Activated B cell treated with CpG ODN at 0.5 μM for 24 hours (primary cell): ENCODE measurements at regions of chr15 and their contacts with region 1.

Region 1: DNA sequence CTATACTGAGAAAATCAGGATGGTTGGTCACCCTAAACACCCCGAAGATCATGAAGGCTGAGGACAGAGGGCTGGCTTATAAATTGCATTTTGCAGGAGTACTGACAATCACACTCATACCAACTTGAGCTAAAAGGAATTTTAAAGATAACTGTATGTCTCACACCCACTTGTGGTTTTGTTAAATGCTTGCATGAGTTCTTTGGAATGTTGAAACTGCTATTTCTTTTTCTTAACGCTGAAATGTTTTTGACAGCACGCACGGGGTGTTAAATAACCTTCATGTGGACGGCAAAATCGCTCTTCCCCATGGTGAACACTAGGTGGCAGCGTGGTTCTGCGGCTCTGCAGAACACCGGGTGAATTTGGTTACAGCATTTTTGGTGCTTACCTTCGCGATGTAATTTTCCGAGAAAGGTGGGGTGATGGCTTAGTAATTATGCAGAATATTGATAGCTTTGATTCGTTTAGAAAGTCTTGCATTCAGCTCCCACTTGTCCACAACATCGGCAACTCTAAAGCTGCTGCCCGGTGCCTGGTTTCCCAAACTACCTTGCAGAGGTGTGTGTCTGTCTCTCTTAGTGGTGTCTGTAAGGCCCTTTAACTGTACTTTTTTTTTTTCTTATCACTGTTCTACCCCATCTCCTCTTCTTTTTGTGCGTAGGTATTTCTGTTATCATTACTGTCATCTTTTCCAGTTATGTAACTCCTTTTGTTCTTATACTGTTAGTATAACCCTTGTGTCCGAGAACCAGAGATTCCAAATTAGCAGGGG is 51.7 kb downstream of the ARNT2 start:
- DNase-seq: peak; percentile 23
- ATAC-seq: peak; percentile 73
- H3K4me3 Mint-ChIP-seq: no peak overlapping the region
- H3K27ac Mint-ChIP-seq: no peak overlapping the region
- H3K4me1 Mint-ChIP-seq: no peaks in the 10 kb centered on the region
- H3K27me3 Mint-ChIP-seq: peaks cover 7% of the 10 kb centered on the region
- CTCF ChIP-seq: peak; percentile 70

Region 2: DNA sequence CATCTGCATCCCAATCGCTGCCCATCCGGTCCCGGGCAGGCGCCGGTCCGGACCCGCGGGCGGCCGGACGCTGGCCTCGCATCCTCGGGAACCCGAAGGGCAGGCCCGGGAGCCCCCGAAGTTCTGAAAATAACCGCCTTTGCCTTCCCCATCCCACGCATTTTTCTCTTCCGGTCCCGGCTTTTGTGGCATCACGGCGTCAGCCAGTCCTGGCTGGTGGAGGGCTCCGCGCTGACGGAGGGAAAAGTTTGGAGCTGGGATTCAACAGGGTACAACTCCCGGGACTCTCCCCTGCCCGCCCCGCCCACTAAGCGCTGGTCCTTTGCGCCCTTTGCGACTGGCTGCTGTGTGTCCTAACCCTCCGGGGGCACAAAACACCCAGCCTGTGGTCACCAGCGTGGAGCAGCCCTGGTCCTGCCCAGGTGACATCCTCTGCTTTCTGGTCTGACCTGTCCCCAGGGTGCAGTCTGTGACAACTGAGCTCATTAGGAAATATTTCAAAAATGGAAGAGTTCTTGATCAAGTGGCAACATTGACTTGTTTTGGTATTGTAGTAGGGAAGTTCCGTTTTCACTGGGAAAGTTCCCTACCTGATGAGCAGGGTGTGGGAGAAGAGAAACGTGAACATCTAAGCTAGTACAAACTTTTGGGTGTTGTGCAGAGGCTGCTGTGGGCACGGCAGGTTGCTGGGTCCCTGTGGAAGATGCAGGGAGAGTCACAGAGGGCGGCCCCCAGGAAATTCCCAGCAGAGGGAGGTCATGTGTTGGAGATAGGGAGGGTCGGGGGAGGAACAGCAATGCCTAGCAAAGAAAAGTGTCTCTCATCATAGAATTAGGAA is 50.9 kb before region 1 on chr15:
- CTCF ChIA-PET with region 1: no interaction called
- POLR2A ChIA-PET with region 1: interaction called, 10 read pairs
- intact Hi-C with region 1: no loop called
- DNase-seq: no peak
- ATAC-seq: no peak
- H3K4me3 Mint-ChIP-seq: peak overlapping the region; percentile 11
- H3K27ac Mint-ChIP-seq: no peak overlapping the region
- H3K4me1 Mint-ChIP-seq: peaks cover 7% of the 10 kb centered on the region
- H3K27me3 Mint-ChIP-seq: peaks cover 66% of the 10 kb centered on the region
- CTCF ChIP-seq: no peak

Region 3: DNA sequence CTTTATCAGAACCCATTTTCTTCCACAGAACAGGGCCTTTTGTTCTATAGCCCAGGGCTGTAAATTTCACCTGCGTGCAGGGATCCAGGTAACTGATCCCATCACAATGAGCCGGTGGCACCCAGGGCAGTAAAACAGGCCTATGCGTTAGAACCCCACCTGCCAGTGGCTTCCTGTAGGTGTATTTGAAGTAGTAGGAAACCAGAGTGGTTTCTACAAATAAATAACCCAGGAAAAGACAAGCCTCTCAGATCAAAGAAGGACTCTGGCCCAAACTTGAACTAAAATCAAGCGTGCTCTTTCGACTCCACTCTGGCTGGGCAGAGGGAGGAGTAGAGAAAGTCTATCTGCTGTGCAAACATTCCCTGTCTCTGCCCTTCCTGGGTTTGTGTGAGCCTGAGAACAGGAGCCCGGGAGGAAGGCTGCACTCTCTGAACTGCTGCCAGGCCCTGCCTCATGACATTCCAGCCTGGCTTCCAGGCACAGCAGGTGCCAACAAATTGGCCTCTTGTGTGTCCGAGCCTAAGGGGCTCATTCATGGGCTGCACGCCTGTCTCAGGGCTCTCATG is 401.0 kb after region 1 on chr15:
- CTCF ChIA-PET with region 1: no interaction called
- POLR2A ChIA-PET with region 1: no interaction called
- intact Hi-C with region 1: loop called (anchors 2 kb)
- DNase-seq: no peak
- ATAC-seq: no peak
- H3K4me3 Mint-ChIP-seq: no peak overlapping the region
- H3K27ac Mint-ChIP-seq: no peak overlapping the region
- H3K4me1 Mint-ChIP-seq: no peaks in the 10 kb centered on the region
- H3K27me3 Mint-ChIP-seq: no peaks in the 10 kb centered on the region
- CTCF ChIP-seq: no peak

Region 4: DNA sequence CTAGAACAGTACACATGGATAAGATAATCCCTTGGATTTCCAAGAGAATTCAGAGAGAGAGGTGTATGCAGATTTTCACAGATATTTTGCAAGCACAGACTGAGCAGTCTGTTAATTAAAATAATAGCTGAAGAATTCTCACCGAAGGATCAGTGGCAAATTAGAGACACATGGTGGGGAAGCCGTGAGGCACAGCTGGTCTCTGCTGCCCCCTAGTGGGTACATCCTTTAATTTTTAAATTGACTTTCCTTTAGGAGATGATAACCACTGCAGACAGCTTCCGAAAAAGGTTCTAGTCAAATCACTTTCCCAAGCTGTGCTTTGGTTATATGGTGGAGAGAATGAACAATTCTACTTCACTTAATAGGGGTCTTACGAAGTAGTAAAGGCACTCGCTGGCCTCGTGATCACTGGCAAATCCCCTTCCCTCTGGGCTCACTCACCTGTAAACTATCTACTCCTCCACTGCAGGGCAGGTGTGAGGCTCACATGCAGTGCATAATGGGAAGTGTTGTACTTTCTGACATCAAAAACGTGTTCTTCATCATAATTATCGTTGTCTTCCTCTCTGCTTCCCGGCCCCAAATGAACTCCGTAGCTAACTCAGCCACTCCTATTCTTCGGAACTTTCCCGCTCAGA is 514.3 kb after region 1 on chr15:
- CTCF ChIA-PET with region 1: interaction called, 54 read pairs
- POLR2A ChIA-PET with region 1: no interaction called
- intact Hi-C with region 1: loop called (anchors 1 kb)
- DNase-seq: no peak
- ATAC-seq: peak; percentile 56
- H3K4me3 Mint-ChIP-seq: no peak overlapping the region
- H3K27ac Mint-ChIP-seq: no peak overlapping the region
- H3K4me1 Mint-ChIP-seq: peaks cover 9% of the 10 kb centered on the region
- H3K27me3 Mint-ChIP-seq: no peaks in the 10 kb centered on the region
- CTCF ChIP-seq: peak; percentile 91